Activated CD4-positive, alpha-beta T cell treated with anti-CD3 and anti-CD28 coated beads for 36 hours (primary cell): ENCODE measurements at regions of chr5 and their contacts with region 1.

Region 1: GRCh38 chr5:111530298-111530740 is 18.0 kb upstream of the STARD4 start:
- DNase-seq: peak; percentile 87
- ATAC-seq: peak; percentile 100
- H3K4me3 Mint-ChIP-seq: peak overlapping the region; percentile 50
- H3K27ac Mint-ChIP-seq: peak overlapping the region; percentile 84
- H3K4me1 Mint-ChIP-seq: peaks cover 19% of the 10 kb centered on the region
- H3K27me3 Mint-ChIP-seq: no peaks in the 10 kb centered on the region

Region 2: GRCh38 chr5:111556501-111556900 is 26.2 kb after region 1 on chr5:
- CTCF ChIA-PET with region 1: interaction called, 12 read pairs
- POLR2A ChIA-PET with region 1: no interaction called
- intact Hi-C with region 1: no loop called
- DNase-seq: no peak
- ATAC-seq: no peak
- H3K4me3 Mint-ChIP-seq: no peak overlapping the region
- H3K27ac Mint-ChIP-seq: no peak overlapping the region
- H3K4me1 Mint-ChIP-seq: peaks cover 22% of the 10 kb centered on the region
- H3K27me3 Mint-ChIP-seq: peaks cover 3% of the 10 kb centered on the region